Prostate gland (tissue), 2 donors: ENCODE measurements at regions of chr2 and their contacts with region 1.

Region 1: DNA sequence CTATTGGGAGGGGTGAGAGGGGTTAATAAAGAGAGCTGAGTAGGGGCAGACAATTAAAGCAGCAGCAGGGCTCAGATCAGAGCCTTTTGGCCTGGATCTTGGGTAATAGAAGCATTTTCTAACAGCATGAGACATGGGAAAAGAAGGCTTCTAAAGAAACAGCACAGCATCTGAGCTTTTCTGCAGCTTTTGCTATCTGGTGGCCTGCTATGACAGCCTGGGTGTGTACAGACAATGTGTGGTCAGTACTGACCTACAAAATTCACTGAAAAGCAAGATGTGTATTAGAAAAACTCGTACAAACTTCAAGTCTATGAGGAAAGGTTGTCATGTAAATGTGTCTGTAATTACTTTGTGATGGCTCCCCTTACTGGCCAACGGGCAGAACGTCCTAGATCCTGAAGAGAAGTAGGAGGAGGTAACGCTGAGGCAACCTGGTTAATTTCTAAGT is 95.6 kb downstream of the GALNT3 start:
- DNase-seq: peak; percentile 19
- H3K4me3 ChIP-seq: no peak overlapping the region
- H3K27ac ChIP-seq: no peak overlapping the region
- H3K4me1 ChIP-seq: no peaks in the 10 kb centered on the region
- H3K27me3 ChIP-seq: no peaks in the 10 kb centered on the region
- CTCF ChIP-seq: peak in 3 of 4 experiments; percentile 14 to 47 (median 45)
- POLR2A ChIP-seq: no peak

Region 2: DNA sequence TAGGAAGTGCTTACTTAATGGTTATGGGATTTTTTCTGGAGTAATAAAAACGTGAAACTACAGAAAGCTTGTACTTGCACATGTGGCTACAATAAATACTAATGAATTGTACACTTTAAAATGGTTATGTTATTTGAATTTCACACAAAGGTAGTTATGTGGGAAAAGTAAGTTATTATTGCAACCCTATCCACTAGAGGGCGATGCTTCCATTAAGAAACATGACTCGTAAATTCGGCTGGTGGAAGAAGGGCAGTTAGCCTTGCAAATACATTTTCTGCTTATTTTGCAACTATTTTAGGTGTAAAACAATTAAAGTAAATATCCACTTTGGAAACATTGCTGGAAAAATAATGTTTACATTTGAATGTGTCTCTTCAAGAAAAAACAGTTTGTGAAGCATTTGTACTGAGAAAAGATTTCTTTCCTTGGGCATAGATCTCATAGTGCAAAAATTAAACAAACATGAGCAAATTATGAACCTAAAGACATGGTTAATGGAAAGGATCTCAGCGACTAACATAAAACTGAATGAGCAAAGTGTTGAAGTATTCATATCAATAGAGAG is 297.1 kb before region 1 on chr2:
- intact Hi-C with region 1: loop called (anchors 5 kb)
- DNase-seq: peak; percentile 42
- H3K4me3 ChIP-seq: no peak overlapping the region
- H3K27ac ChIP-seq: no peak overlapping the region
- H3K4me1 ChIP-seq: no peaks in the 10 kb centered on the region
- H3K27me3 ChIP-seq: no peaks in the 10 kb centered on the region
- CTCF ChIP-seq: peak; percentile 55 to 84 (median 71)
- POLR2A ChIP-seq: no peak

Region 3: GRCh38 chr2:165497659-165498317 is 200.7 kb before region 1 on chr2:
- intact Hi-C with region 1: no loop called
- DNase-seq: no peak
- H3K4me3 ChIP-seq: no peak overlapping the region
- H3K27ac ChIP-seq: no peak overlapping the region
- H3K4me1 ChIP-seq: no peaks in the 10 kb centered on the region
- H3K27me3 ChIP-seq: no peaks in the 10 kb centered on the region
- CTCF ChIP-seq: no peak
- POLR2A ChIP-seq: no peak

Region 4: GRCh38 chr2:165563468-165564225 is 134.8 kb before region 1 on chr2:
- intact Hi-C with region 1: no loop called
- DNase-seq: no peak
- H3K4me3 ChIP-seq: no peak overlapping the region
- H3K27ac ChIP-seq: no peak overlapping the region
- H3K4me1 ChIP-seq: no peaks in the 10 kb centered on the region
- H3K27me3 ChIP-seq: no peaks in the 10 kb centered on the region
- CTCF ChIP-seq: no peak
- POLR2A ChIP-seq: no peak

Region 5: DNA sequence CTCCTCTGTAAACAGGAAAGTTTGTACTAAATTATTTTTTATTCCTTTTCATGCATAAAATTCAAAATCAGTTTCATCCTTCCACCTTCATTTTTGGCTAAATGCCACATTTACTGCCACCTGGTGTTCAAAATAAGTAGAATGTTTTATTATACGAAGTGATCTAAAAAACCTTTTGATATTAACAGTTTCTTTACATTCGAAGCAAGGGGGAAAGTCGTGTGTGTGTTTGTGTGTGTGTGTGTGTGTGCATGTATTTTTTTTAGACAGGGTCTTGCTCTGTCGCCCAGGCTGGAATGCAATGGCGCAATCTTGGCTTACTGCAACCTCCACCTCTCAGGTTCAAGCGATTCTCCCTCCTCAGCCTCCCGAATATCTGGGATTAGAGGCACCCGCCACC is 686.3 kb after region 1 on chr2:
- intact Hi-C with region 1: no loop called
- DNase-seq: no peak
- H3K4me3 ChIP-seq: no peak overlapping the region
- H3K27ac ChIP-seq: no peak overlapping the region
- H3K4me1 ChIP-seq: no peaks in the 10 kb centered on the region
- H3K27me3 ChIP-seq: no peaks in the 10 kb centered on the region
- CTCF ChIP-seq: peak in 3 of 4 experiments; percentile 61 to 64 (median 63)
- POLR2A ChIP-seq: no peak